ENCODE measurements at regions of chr19 and their contacts with region 1.

Region 1: DNA sequence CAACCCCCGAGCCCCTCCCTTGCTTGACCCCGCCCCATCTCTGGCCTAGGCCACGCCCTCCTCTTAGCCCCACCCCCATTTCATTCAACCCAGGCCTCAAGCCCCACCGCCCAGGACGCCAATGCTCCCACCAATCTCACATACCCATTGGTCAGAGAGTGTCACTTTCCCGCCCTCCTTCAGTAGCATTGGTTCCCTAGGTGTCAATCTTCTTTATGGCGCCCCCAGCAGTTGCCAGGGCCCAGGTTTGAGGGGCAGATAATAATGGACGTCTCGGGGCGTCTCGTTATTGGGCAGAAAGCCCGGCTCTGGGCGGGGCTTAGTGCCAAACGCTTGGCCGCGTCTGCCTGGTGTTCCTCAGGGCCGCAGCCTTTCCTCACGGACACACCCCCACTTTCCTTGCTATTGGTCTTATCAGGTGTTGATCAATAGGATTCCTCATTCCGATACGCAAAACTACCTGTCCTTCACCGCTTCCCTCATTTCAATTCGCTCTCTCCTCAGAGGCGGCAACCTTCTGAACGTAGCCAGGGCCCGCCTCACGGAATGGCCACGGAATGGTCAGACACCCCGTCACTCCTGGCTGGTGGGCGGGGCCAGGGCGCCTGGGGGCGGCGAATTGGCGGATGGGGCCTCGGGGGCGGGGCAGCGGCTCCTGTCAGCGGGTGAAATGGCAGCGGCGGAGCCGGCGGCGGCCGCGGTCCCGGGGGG is at the start of gene EVI5L:
- DNase-seq: peak; percentile 99 to 100 (median 100)
- H3K4me3 ChIP-seq: peak within 1 kb of the TSS; percentile 36 to 84 (median 72)
- H3K27ac ChIP-seq: peak within 1 kb of the TSS in 39 of 59 donors; percentile 12 to 87 (median 57)
- H3K27me3 ChIP-seq: no peaks in the 10 kb centered on the region
- CTCF ChIP-seq: peak in 14 of 56 donors; percentile 6 to 45 (median 16)
- total RNA-seq, gene EVI5L: 47.6 to 92.0 (median 62.5) TPM

Region 2: DNA sequence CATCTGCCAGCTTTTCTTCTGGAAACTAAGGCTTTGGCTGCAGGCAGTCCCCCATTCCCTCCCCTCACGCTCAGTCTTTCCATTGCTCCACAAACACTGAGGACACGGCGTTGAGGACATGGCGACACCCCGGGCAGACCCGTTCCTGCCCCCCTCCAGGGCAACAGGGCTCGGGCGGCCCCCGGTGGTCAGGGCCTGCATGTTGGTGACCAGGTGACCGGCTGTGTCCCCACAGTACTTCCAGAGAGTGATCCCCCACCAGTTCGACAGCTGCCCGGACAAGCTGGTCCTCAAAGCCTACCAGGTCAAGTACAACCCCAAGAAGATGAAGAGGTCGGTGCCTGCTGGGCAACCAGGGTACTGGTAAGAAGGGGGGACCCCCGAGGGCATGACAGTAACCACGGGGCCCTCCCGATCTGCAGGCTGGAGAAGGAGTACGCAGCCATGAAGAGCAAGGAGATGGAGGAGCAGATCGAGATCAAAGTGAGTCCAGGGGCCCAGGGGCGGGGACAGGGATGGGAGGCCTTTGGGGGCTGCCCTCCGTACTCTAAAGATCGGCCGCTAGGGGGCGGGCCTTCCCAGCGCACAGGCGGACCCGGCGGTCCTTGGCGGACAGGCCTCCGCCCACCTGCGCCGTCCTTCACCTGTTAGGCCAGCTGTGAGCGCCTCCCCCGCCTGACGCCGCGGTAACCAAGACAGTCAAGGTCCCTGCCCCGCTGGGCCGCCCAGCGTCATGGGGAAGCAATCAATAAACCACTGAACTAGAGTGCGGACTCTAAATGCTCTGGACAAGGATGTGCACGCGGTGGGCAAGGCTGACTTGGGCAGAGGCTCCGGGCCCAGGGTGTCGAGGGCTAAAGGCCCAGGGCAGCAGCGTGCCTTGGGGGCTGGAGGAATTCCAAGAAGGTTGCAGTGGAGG is 23.4 kb after region 1 on chr19:
- intact Hi-C with region 1: loop called in 1 of 2 experiments (anchors 1 kb)
- DNase-seq: peak in 8 of 10 donors; percentile 61 to 83 (median 76)
- H3K4me3 ChIP-seq: peak overlapping the region in 34 of 59 donors; percentile 1 to 55 (median 22)
- H3K27ac ChIP-seq: peak overlapping the region in 58 of 59 donors; percentile 35 to 100 (median 97)
- H3K27me3 ChIP-seq: no peaks in the 10 kb centered on the region
- CTCF ChIP-seq: peak; percentile 49 to 94 (median 82)

Region 3: DNA sequence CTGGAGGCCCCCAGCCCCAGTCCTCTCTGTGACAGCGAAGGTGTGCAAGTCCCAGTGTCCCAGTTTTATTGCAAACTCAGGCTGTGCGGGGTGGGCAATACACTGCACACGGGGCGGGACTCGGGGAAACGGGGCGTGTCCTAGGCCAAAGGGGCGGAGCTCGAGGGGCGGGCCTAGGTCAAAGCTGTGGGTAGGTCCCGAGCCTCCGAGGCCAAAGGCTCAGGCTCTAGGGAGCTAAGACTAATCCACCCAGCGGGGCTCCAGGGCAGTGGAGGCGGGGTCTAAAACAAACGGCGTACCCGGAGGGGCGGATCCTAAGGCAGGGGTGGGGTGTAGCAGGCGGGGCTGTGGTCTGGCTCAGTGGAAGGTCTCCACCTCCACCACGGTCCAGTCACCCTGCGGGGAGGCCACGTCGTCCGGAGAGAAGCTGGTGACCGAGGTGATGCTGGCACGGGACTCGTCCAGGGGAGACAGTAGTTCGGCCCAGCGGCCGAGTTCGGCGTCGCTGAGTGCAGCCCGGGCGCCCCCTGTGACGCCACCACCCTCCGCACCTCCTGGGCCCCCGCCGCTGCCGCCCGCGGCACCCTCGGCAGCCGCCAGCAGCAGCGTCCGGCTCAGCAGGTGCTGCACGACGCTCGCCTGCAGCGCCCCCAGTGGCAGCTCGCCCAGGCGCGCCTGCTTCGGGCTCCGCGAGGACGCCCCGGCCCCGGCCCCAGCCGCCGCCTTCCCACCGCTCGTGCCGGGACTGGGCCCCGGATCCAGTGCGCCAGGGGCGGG is 39.1 kb after region 1 on chr19:
- intact Hi-C with region 1: loop called (anchors 5 kb)
- DNase-seq: peak in 3 of 10 donors; percentile 51 to 79 (median 66)
- H3K4me3 ChIP-seq: peak overlapping the region; percentile 18 to 66 (median 49)
- H3K27ac ChIP-seq: peak overlapping the region in 43 of 59 donors; percentile 9 to 79 (median 46)
- H3K27me3 ChIP-seq: peaks cover 0 to 5% (median 0%) of the 10 kb centered on the region in 45 donors
- CTCF ChIP-seq: peak; percentile 28 to 90 (median 72)

Region 4: GRCh38 chr19:7903244-7904073 is 73.7 kb after region 1 on chr19 and contains the start of gene MAP2K7:
- intact Hi-C with region 1: loop called in 1 of 2 experiments (anchors 2 kb)
- DNase-seq: peak; percentile 98 to 100 (median 99)
- H3K4me3 ChIP-seq: peak within 1 kb of the TSS; percentile 61 to 99 (median 88)
- H3K27ac ChIP-seq: peak within 1 kb of the TSS in 58 of 59 donors; percentile 54 to 97 (median 90)
- H3K27me3 ChIP-seq: no peaks in the 10 kb centered on the region
- CTCF ChIP-seq: peak; percentile 78 to 99 (median 94)
- total RNA-seq, gene MAP2K7: 28.0 to 51.9 (median 39.4) TPM